Posterior cingulate gyrus (tissue), 11 donors: ENCODE measurements at regions of chr9 and their contacts with region 1.

Region 1: DNA sequence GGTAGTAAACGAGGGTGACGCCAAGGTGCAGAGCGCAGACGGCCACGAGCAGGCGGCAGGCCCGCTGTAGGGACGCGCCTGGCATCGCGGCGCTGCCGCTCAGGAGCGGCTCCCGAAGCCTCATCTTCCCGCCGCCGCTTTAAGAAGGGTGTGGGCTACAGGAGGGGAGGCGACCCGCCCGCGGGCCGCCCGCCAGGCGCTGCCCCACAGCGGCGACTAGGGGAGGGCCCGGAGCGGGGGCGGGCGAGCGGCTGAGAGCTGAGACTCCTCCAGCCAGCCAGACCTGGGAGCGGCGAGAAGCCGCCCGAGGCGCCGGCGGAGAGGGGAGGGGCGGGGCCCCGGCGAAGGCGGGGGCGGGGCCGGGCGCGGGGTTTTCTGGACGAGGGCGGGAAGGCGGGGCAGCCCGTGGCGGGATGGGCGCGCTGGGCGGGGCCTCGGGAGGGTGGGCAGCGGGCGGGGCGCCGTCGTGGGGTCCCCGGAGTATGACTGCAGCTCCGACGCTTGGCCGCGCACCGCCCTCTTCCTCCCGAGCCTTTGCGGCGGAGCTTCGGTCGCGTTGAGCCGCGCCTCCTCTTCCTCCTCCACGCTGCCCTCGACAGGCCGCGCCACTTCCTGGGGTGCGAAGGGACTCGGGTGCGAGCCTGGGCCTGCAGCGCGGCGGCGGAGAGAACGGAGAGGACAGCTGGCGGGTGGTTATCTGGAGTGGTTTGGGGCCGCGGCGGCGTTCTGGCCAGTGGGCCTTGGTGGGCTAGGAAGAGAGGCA is at the start of gene B4GALT1:
- DNase-seq: peak; percentile 69 to 96 (median 82)

Region 2: GRCh38 chr9:33116860-33117259 is 50.4 kb before region 1 on chr9:
- intact Hi-C with region 1: no loop called
- DNase-seq: peak in 1 of 10 donors; percentile 1

Region 3: GRCh38 chr9:33264473-33265177 is 97.4 kb after region 1 on chr9 and contains the starts of genes BAG1 and CHMP5:
- intact Hi-C with region 1: loop called (anchors 5 kb)
- DNase-seq: peak; percentile 98 to 100 (median 100)